BJ (cell line): ENCODE measurements at regions of chrX and their contacts with region 1.

Region 1: DNA sequence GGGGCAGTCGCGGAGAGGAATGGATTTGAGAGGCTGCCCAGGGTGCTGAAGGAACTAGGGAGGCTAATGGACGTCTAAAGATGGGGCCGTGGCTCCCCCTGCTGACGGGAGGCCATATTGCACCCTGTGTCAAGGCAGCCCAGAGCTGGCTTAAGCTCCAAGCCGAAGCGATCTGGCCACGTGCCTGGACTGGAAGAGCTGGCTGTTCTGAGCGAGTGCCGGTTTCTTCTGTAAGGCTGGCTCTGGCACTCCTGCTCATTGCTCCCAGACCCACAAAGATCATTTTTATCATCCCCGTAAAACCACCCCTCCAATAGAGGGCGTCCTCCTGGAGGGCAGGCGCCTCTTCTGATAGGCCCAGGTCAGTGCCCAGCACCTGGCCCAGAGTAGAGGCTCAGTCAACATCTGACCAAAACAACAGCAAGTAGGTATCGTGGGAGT is 5.6 kb downstream of the PNCK start:
- DNase-seq: peak; percentile 5
- H3K4me3 ChIP-seq: no peak overlapping the region; the same call in 1 of the 2 replicates
- H3K27me3 ChIP-seq: no peaks in the 10 kb centered on the region; the same call in none of the 2 replicates
- CTCF ChIP-seq: peak; percentile 71

Region 2: DNA sequence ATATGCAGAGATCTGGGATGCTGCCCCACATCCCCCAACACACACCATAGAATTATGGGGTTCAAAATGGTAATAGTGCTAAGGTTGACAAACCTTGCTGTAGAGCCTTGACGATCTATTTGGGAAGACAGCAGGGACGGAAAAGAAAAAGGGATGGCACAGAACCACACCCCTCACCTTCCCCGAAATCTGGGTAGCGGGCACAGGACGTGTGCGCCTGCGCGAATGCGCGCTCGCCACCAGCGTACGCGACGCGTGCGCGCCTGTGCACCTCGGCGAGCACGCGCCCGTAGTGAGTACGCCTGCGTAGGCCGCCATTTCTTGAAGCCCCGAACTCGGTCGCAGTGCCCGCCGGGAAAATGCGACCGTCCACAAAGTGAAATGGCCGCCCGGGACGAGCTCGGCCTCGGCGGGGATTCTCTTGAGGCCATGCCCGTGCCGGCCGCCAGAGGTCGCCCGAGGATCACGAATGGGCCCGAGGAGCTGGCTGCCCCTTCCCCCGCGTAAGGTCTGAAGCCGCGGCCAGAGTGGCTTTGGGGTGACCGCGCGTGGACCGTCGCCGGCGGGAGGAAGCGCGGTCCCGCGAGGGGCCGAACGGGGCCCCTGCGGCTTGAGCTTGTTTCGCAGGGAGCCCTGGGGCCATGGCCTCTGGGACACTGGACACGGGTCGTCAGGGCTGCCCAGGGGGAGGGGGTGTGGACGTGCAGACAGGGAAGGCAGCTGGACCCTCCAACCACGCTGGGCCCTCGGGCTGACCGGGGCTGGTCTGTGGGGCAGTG is 726.5 kb before region 1 on chrX:
- CTCF ChIA-PET with region 1: interaction called, 15 read pairs
- POLR2A ChIA-PET with region 1: no interaction called
- DNase-seq: peak; percentile 58
- H3K4me3 ChIP-seq: peak overlapping the region; percentile 54
- H3K27me3 ChIP-seq: no peaks in the 10 kb centered on the region
- CTCF ChIP-seq: peak; percentile 76

Region 3: GRCh38 chrX:153554519-153555167 is 113.3 kb before region 1 on chrX:
- CTCF ChIA-PET with region 1: interaction called, 55 read pairs
- POLR2A ChIA-PET with region 1: no interaction called
- DNase-seq: no peak
- H3K4me3 ChIP-seq: no peak overlapping the region
- H3K27me3 ChIP-seq: no peaks in the 10 kb centered on the region
- CTCF ChIP-seq: peak; percentile 72

Region 4: DNA sequence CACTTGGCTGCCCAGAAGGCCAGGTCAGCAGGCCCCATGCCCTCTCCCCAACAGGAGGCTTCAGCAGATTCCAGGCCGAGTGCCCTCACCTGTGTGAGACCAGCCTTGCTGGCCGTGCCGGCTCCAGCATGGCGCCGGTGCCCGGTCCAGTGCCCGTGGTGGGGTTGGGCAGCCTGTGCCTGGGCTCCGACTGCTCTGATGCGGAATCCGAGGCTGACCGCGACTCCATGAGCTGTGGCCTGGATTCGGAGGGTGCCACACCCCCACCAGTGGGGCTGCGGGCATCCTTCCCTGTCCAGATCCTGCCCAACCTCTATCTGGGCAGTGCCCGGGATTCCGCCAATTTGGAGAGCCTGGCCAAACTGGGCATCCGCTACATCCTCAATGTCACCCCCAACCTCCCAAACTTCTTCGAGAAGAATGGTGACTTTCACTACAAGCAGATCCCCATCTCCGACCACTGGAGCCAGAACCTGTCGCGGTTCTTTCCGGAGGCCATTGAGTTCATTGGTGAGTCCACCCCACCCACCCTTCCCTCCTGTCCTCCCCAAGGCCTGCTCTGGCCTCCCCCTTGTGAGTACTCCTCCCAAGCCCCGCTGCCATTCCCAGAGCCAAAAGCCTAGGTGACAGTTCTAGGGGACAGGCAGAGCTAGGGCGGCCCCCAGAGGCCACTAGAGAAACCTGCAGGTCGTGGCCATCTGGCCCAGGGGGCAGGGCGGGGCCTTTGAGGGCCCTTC is 18.6 kb before region 1 on chrX:
- CTCF ChIA-PET with region 1: interaction called, 10 read pairs
- POLR2A ChIA-PET with region 1: no interaction called
- DNase-seq: no peak
- H3K4me3 ChIP-seq: no peak overlapping the region
- H3K27me3 ChIP-seq: peaks cover 18% of the 10 kb centered on the region
- CTCF ChIP-seq: peak; percentile 30

Region 5: DNA sequence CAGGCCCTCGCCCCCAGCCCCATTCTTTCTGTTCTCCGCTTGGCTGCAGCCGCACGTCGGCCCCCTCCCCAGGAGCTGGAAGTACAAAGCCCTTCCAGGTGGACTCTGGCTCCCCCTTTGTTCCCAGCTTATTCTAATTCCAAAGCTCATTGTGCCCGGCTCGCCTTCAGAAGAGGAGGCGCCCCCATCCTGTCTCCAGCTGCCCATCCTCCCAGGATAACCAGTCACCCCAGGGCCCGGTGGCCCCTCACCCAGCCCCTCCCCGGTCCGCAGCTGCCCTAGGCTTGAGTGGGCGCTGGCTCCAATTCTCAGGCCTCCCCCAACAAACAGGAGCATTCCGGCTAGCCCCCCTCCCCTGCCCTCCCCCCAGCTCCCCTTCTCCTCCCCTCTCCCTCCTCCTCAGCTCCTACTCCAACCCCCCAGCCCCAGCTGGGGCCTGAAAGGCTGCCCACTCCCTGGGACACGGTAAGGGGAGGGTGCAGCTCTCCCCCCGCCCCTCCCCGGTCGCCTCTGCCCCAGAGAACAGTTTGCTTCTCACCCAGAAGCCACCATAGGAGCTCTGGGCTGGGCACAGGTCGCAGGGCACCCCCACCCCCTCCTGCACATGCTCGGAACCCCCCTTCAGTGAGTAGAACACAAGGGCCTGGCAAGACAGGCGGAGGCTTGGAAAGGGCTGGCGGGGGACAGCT is 16.6 kb after region 1 on chrX:
- CTCF ChIA-PET with region 1: interaction called, 23 read pairs
- POLR2A ChIA-PET with region 1: no interaction called
- DNase-seq: no peak
- H3K4me3 ChIP-seq: no peak overlapping the region
- H3K27me3 ChIP-seq: no peaks in the 10 kb centered on the region
- CTCF ChIP-seq: no peak

Region 6: DNA sequence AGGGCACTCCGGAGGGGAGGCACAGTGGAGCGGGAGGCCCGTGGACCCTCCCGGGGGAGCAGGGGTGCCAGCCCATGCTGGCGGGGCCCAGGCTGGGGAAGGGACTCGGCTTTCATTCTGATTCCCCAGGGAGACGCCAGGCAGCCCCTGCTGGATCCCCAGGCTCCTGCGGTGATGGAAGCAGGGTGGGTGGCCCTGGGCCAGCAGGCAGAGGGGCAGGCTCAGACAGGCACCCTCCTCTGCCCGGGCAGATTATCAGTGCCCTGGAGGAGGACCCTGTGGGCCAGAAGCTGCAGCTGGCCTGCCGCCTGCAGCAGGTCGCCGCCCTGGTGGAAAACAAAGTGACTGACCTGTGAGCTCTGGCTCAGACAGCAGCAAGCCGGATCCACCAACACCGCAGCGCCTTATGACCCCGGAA is 110.7 kb after region 1 on chrX:
- CTCF ChIA-PET with region 1: no interaction called
- POLR2A ChIA-PET with region 1: no interaction called
- DNase-seq: no peak
- H3K4me3 ChIP-seq: no peak overlapping the region
- H3K27me3 ChIP-seq: no peaks in the 10 kb centered on the region
- CTCF ChIP-seq: 0 out of 2 replicates have a peak, but pooled peaks have one; percentile 14